Activated CD8-positive, alpha-beta T cell treated with anti-CD3 and anti-CD28 coated beads, Interleukin-2, amount 10 ng/mL, durations not matched to agents 7 days and 5 days (primary cell): ENCODE measurements at regions of chr15 and their contacts with region 1.

Region 1: GRCh38 chr15:52039925-52040781 is 21.1 kb downstream of the MAPK6 start:
- DNase-seq: no peak
- ATAC-seq: no peak
- H3K4me3 Mint-ChIP-seq: no peak overlapping the region
- H3K27ac Mint-ChIP-seq: peak overlapping the region; percentile 3
- H3K4me1 Mint-ChIP-seq: peaks cover 28% of the 10 kb centered on the region
- H3K27me3 Mint-ChIP-seq: no peaks in the 10 kb centered on the region

Region 2: GRCh38 chr15:52019388-52020220 is 20.5 kb before region 1 on chr15:
- CTCF ChIA-PET with region 1: interaction called, 22 read pairs
- POLR2A ChIA-PET with region 1: interaction called, 23 read pairs
- DNase-seq: peak; percentile 74
- ATAC-seq: peak; percentile 63
- H3K4me3 Mint-ChIP-seq: peak overlapping the region; percentile 97
- H3K27ac Mint-ChIP-seq: peak overlapping the region; percentile 99
- H3K4me1 Mint-ChIP-seq: peaks cover 38% of the 10 kb centered on the region
- H3K27me3 Mint-ChIP-seq: peaks cover 4% of the 10 kb centered on the region